Sciatic nerve (tissue), 2 donors: ENCODE measurements at regions of chr12 and their contacts with region 1.

Region 1: DNA sequence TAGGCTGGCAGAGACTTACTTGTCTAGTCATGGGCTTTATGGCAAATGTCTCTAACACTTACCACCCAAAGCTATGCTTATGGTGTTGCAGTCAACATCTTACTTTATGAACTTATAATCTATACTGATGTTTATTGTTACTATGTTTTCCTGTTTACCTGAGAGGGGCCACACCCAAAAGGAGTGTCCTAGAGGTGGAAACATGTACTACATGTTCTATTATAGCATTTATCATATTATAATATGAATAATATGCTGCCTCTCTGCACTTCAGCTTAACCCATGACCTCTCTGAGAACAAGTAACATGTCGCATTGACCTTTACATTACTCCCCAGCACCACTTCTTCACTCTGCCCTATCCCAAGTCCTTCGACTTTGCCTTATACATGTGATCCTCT is 501.8 kb downstream of the ETNK1 start:
- DNase-seq: no peak
- ATAC-seq: no peak

Region 2: GRCh38 chr12:22437031-22437780 is 689.6 kb before region 1 on chr12:
- intact Hi-C with region 1: loop called (anchors 10 kb)
- DNase-seq: no peak
- ATAC-seq: no peak

Region 3: DNA sequence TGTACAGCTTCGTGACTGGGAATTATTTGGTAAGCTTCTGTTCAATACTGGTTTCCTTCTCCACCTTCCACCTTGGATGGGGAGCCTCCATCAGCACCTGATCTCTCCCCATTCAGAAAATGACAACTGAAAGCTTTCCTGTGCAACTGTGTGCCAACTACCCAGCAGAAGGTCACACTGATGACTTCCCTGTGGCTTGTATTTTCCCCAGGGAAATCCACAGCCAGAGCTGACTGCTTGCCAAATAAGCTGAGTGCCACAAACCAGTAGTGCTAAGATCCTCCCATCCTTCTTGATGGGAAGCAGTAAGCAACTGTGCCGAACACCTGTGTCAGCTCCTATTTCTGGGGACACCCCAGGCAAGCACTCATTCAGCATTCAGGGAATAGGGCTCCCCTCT is 1079.8 kb after region 1 on chr12:
- intact Hi-C with region 1: no loop called
- DNase-seq: no peak
- ATAC-seq: no peak